CD4-positive, alpha-beta memory T cell (primary cell): ENCODE measurements at regions of chr9 and their contacts with region 1.

Region 1: GRCh38 chr9:134163353-134164196 is 789 bp downstream of the RNU6ATAC start:
- DNase-seq: peak; percentile 71 to 82 (median 74)
- H3K4me3 ChIP-seq: peak overlapping the region in 1 of 2 donors; percentile 29
- H3K4me3 Mint-ChIP-seq: no peak overlapping the region
- H3K27ac ChIP-seq: no peak overlapping the region
- H3K27ac Mint-ChIP-seq: peak overlapping the region in 2 of 7 donors; percentile 32 to 75
- H3K4me1 ChIP-seq: peaks cover 9% of the 10 kb centered on the region
- H3K4me1 Mint-ChIP-seq: peaks cover 8 to 28% (median 12%) of the 10 kb centered on the region in 4 donors
- H3K27me3 ChIP-seq: no peaks in the 10 kb centered on the region
- H3K27me3 Mint-ChIP-seq: peaks cover 0 to 2% of the 10 kb centered on the region in 2 donors

Region 2: GRCh38 chr9:134024828-134025605 is 138.6 kb before region 1 on chr9 and contains the start of gene BRD3OS:
- CTCF ChIA-PET with region 1: no interaction called
- POLR2A ChIA-PET with region 1: interaction called, 25 read pairs
- intact Hi-C with region 1: loop called (anchors 1 kb)
- DNase-seq: peak; percentile 89 to 96 (median 93)
- H3K4me3 ChIP-seq: peak within 1 kb of the TSS; percentile 36 to 89
- H3K4me3 Mint-ChIP-seq: peak within 1 kb of the TSS; percentile 78 to 86 (median 82)
- H3K27ac ChIP-seq: peak within 1 kb of the TSS; percentile 68
- H3K27ac Mint-ChIP-seq: peak within 1 kb of the TSS; percentile 45 to 90 (median 85)
- H3K4me1 ChIP-seq: peaks cover 14% of the 10 kb centered on the region
- H3K4me1 Mint-ChIP-seq: peaks cover 3 to 22% (median 7%) of the 10 kb centered on the region in 4 donors
- H3K27me3 ChIP-seq: no peaks in the 10 kb centered on the region
- H3K27me3 Mint-ChIP-seq: no peaks in the 10 kb centered on the region
- total RNA-seq, gene BRD3OS: 18.3 to 21.5 TPM

Region 3: DNA sequence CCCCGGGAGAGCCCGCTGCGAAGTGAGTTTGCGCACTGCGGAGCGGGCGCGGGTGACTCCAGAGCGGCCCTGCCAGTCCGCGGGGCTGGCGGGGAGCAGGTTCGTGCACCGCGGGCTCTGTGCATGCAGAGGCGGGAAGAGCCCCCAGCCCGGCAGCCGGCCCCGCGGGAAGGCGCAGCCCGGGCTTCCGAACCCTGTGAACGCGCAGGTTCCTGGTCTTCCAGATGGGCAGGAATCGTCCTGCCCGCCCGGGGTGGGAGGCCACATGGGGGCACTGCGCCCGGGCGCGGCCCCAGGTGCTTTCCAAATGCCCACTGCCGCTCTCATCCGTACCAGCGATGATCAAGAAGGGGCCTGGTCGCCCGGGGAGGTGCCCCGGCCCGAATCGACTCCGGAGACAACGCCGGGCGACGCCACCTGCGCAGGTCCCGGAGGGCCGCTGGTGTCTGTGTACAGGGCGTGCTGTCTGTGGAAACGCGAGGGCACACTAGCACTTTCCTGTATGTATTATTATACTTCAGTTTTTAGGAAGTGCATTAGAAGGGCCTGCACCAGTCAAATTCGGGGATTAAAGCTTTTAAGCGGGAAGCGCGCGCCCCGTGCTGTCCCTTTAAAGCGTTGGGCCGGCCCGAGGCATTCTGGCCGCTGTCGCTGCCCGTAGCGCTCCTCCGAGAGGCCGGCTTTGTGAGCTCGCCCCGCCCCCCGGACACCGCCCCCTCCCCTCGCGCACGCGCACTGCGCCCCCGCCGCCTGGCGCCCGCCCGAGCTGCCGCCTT is 28.0 kb before region 1 on chr9 and contains the start of gene WDR5:
- CTCF ChIA-PET with region 1: interaction called, 10 read pairs
- POLR2A ChIA-PET with region 1: interaction called, 84 read pairs
- intact Hi-C with region 1: loop called (anchors 1 kb)
- DNase-seq: peak; percentile 87 to 93 (median 90)
- H3K4me3 ChIP-seq: peak within 1 kb of the TSS; percentile 47 to 94
- H3K4me3 Mint-ChIP-seq: peak within 1 kb of the TSS; percentile 89 to 95 (median 90)
- H3K27ac ChIP-seq: peak within 1 kb of the TSS; percentile 84
- H3K27ac Mint-ChIP-seq: peak within 1 kb of the TSS; percentile 81 to 92 (median 89)
- H3K4me1 ChIP-seq: peaks cover 39% of the 10 kb centered on the region
- H3K4me1 Mint-ChIP-seq: peaks cover 25 to 53% (median 37%) of the 10 kb centered on the region in 4 donors
- H3K27me3 ChIP-seq: no peaks in the 10 kb centered on the region
- H3K27me3 Mint-ChIP-seq: no peaks in the 10 kb centered on the region
- total RNA-seq, gene WDR5: 30.3 to 32.7 TPM

Region 4: GRCh38 chr9:134325817-134326723 is 162.5 kb after region 1 on chr9 and contains the start of gene RXRA:
- CTCF ChIA-PET with region 1: no interaction called
- POLR2A ChIA-PET with region 1: interaction called, 11 read pairs
- intact Hi-C with region 1: loop called (anchors 2 kb)
- DNase-seq: peak; percentile 63 to 80 (median 68)
- H3K4me3 ChIP-seq: peak within 1 kb of the TSS; percentile 57 to 80
- H3K4me3 Mint-ChIP-seq: peak within 1 kb of the TSS; percentile 73 to 82 (median 80)
- H3K27ac ChIP-seq: peak within 1 kb of the TSS; percentile 45
- H3K27ac Mint-ChIP-seq: peak within 1 kb of the TSS in 4 of 7 donors; percentile 48 to 97 (median 72)
- H3K4me1 ChIP-seq: peaks cover 22% of the 10 kb centered on the region
- H3K4me1 Mint-ChIP-seq: peaks cover 4 to 32% (median 12%) of the 10 kb centered on the region in 4 donors
- H3K27me3 ChIP-seq: no peaks in the 10 kb centered on the region
- H3K27me3 Mint-ChIP-seq: no peaks in the 10 kb centered on the region
- total RNA-seq, gene RXRA: 11.6 to 11.9 TPM

Region 5: DNA sequence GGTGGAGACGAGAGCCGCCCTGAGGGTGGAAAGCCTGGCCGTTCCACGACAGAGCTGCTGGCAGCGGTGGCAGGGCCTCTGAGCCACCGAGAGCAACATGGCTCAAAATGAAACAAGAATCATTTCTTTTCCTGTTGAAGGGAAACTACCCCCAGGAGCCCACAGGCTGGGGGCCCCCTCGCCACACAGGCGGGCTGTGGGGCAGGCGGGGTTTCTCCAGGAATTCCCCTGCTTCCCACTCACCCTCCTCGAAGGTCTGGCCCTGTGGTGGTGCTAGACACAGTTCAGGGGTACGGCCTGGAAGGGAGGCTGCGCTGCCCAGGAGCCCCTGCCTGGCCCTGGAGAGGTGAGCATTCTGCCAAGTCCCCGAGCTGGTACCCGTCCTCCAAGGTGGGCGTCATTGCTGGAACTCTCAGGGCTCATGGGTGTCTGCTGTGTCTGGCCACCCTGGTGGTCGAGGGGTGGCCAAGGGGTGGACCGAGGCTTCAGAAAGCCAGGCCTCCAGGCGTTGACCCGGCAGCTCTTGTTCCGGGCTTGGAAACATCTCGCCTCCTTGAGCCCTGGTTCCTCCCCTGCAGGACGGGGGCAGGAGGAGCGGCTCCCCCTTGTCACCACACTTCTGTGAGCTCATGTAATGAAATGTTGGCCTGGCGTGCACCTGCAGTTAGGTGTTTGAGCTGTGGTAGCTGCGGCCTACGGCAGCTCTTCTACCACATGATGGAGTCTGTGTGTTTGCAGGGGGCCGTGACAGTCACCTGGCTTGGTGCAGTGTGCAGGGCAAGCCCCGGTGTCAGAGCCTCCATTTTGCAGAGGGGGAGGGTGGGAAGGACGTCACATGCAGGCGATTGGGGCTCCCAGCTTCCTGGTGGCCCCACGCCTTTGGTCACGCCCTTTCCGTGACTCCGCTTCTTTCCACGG is 228.0 kb after region 1 on chr9:
- CTCF ChIA-PET with region 1: interaction called, 3 read pairs
- POLR2A ChIA-PET with region 1: interaction called, 17 read pairs
- intact Hi-C with region 1: loop called (anchors 2 kb)
- DNase-seq: peak; percentile 80 to 96 (median 82)
- H3K4me3 ChIP-seq: peak overlapping the region; percentile 41 to 52
- H3K4me3 Mint-ChIP-seq: peak overlapping the region; percentile 79 to 90 (median 84)
- H3K27ac ChIP-seq: peak overlapping the region; percentile 97
- H3K27ac Mint-ChIP-seq: peak overlapping the region; percentile 97 to 99 (median 98)
- H3K4me1 ChIP-seq: peaks cover 67% of the 10 kb centered on the region
- H3K4me1 Mint-ChIP-seq: peaks cover 33 to 71% (median 55%) of the 10 kb centered on the region in 4 donors
- H3K27me3 ChIP-seq: no peaks in the 10 kb centered on the region
- H3K27me3 Mint-ChIP-seq: no peaks in the 10 kb centered on the region

Region 6: GRCh38 chr9:134399435-134400056 is 236.0 kb after region 1 on chr9:
- CTCF ChIA-PET with region 1: interaction called, 3 read pairs
- POLR2A ChIA-PET with region 1: interaction called, 17 read pairs
- intact Hi-C with region 1: no loop called
- DNase-seq: no peak
- H3K4me3 ChIP-seq: no peak overlapping the region
- H3K4me3 Mint-ChIP-seq: peak overlapping the region in 1 of 8 donors; percentile 10
- H3K27ac ChIP-seq: no peak overlapping the region
- H3K27ac Mint-ChIP-seq: peak overlapping the region in 4 of 7 donors; percentile 9 to 87 (median 54)
- H3K4me1 ChIP-seq: peaks cover 57% of the 10 kb centered on the region
- H3K4me1 Mint-ChIP-seq: peaks cover 25 to 62% (median 38%) of the 10 kb centered on the region in 4 donors
- H3K27me3 ChIP-seq: no peaks in the 10 kb centered on the region
- H3K27me3 Mint-ChIP-seq: no peaks in the 10 kb centered on the region

Region 7: GRCh38 chr9:134455934-134456739 is 292.6 kb after region 1 on chr9:
- CTCF ChIA-PET with region 1: interaction called, 4 read pairs
- POLR2A ChIA-PET with region 1: interaction called, 31 read pairs
- intact Hi-C with region 1: no loop called
- DNase-seq: peak; percentile 76 to 83 (median 81)
- H3K4me3 ChIP-seq: peak overlapping the region; percentile 62 to 76
- H3K4me3 Mint-ChIP-seq: peak overlapping the region; percentile 73 to 94 (median 84)
- H3K27ac ChIP-seq: peak overlapping the region; percentile 64
- H3K27ac Mint-ChIP-seq: peak overlapping the region; percentile 86 to 96 (median 93)
- H3K4me1 ChIP-seq: peaks cover 22% of the 10 kb centered on the region
- H3K4me1 Mint-ChIP-seq: peaks cover 4 to 18% (median 9%) of the 10 kb centered on the region in 4 donors
- H3K27me3 ChIP-seq: no peaks in the 10 kb centered on the region
- H3K27me3 Mint-ChIP-seq: no peaks in the 10 kb centered on the region